CD8-positive, alpha-beta T cell (primary cell): ENCODE measurements at regions of chr17 and their contacts with region 1.

Region 1: GRCh38 chr17:8248751-8249607 is at the start of gene PFAS:
- DNase-seq: peak; percentile 92 to 98 (median 96)
- ATAC-seq: peak; percentile 39
- H3K4me3 ChIP-seq: peak within 1 kb of the TSS; percentile 84 to 95
- H3K4me3 Mint-ChIP-seq: peak within 1 kb of the TSS; percentile 98
- H3K27ac ChIP-seq: peak within 1 kb of the TSS; percentile 97 to 98
- H3K27ac Mint-ChIP-seq: peak within 1 kb of the TSS; percentile 100
- H3K4me1 ChIP-seq: peaks cover 34% of the 10 kb centered on the region
- H3K4me1 Mint-ChIP-seq: peaks cover 48% of the 10 kb centered on the region
- H3K27me3 ChIP-seq: no peaks in the 10 kb centered on the region
- H3K27me3 Mint-ChIP-seq: no peaks in the 10 kb centered on the region
- CTCF ChIP-seq: no peak
- total RNA-seq, gene PFAS: 23.8 to 25.0 TPM

Region 2: GRCh38 chr17:7572588-7573323 is 676.2 kb before region 1 on chr17:
- CTCF ChIA-PET with region 1: no interaction called
- POLR2A ChIA-PET with region 1: no interaction called
- intact Hi-C with region 1: loop called in 1 of 2 experiments (anchors 5 kb)
- DNase-seq: peak in 8 of 9 experiments; percentile 99 to 100 (median 100)
- ATAC-seq: peak; percentile 83
- H3K4me3 ChIP-seq: peak overlapping the region; percentile 97 to 100
- H3K4me3 Mint-ChIP-seq: peak overlapping the region; percentile 99
- H3K27ac ChIP-seq: peak overlapping the region; percentile 98 to 99
- H3K27ac Mint-ChIP-seq: peak overlapping the region; percentile 96
- H3K4me1 ChIP-seq: peaks cover 28% of the 10 kb centered on the region
- H3K4me1 Mint-ChIP-seq: peaks cover 48% of the 10 kb centered on the region
- H3K27me3 ChIP-seq: no peaks in the 10 kb centered on the region
- H3K27me3 Mint-ChIP-seq: no peaks in the 10 kb centered on the region
- CTCF ChIP-seq: no peak

Region 3: GRCh38 chr17:8156246-8156992 is 92.6 kb before region 1 on chr17:
- CTCF ChIA-PET with region 1: interaction called, 3 read pairs
- POLR2A ChIA-PET with region 1: interaction called, 21 read pairs
- intact Hi-C with region 1: loop called (anchors 1 to 2 kb)
- DNase-seq: peak; percentile 100
- ATAC-seq: peak; percentile 68
- H3K4me3 ChIP-seq: peak overlapping the region; percentile 82 to 90
- H3K4me3 Mint-ChIP-seq: no peak overlapping the region
- H3K27ac ChIP-seq: peak overlapping the region; percentile 100
- H3K27ac Mint-ChIP-seq: no peak overlapping the region
- H3K4me1 ChIP-seq: peaks cover 77% of the 10 kb centered on the region
- H3K4me1 Mint-ChIP-seq: peaks cover 68% of the 10 kb centered on the region
- H3K27me3 ChIP-seq: no peaks in the 10 kb centered on the region
- H3K27me3 Mint-ChIP-seq: no peaks in the 10 kb centered on the region
- CTCF ChIP-seq: no peak

Region 4: DNA sequence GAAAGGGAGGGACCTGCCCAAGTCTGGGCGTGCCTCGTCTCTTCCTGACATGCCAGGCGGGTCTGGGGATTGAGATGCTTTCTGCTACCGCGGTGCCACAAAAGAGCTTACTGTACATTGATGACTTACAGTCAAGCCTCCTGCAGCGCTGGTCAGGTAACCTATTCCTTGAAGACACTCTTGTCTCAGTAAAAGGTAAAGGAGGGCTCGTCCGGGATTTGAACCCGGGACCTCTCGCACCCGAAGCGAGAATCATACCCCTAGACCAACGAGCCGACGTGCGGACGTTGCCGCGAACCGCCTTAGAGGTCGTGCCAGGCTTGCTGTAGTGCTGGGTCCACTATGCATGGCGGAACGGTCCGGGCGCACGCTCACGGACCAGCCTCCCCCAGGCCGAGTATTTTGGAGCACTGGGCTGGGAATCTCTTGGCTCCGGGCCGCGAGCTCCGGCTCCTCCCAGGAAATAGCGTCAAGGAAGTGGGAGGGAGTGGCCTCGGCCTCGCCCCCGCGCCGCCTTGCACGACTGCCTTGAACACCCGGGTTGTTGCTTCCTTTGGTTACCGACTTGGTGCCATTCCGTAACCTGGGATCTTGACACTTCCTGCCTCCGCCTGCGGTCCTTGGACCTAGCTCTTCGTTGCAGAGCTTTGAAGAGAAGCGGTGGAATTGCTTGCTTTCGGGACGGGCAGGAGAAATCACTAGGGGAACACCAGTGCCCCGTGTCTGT is 26.2 kb before region 1 on chr17:
- CTCF ChIA-PET with region 1: interaction called, 45 read pairs
- POLR2A ChIA-PET with region 1: interaction called, 248 read pairs
- intact Hi-C with region 1: loop called (anchors 1 kb)
- DNase-seq: peak; percentile 82 to 93 (median 90)
- ATAC-seq: peak; percentile 47
- H3K4me3 ChIP-seq: peak overlapping the region; percentile 80 to 93
- H3K4me3 Mint-ChIP-seq: peak overlapping the region; percentile 92
- H3K27ac ChIP-seq: peak overlapping the region; percentile 90 to 98
- H3K27ac Mint-ChIP-seq: peak overlapping the region; percentile 97
- H3K4me1 ChIP-seq: peaks cover 43% of the 10 kb centered on the region
- H3K4me1 Mint-ChIP-seq: peaks cover 61% of the 10 kb centered on the region
- H3K27me3 ChIP-seq: no peaks in the 10 kb centered on the region
- H3K27me3 Mint-ChIP-seq: no peaks in the 10 kb centered on the region
- CTCF ChIP-seq: no peak

Region 5: DNA sequence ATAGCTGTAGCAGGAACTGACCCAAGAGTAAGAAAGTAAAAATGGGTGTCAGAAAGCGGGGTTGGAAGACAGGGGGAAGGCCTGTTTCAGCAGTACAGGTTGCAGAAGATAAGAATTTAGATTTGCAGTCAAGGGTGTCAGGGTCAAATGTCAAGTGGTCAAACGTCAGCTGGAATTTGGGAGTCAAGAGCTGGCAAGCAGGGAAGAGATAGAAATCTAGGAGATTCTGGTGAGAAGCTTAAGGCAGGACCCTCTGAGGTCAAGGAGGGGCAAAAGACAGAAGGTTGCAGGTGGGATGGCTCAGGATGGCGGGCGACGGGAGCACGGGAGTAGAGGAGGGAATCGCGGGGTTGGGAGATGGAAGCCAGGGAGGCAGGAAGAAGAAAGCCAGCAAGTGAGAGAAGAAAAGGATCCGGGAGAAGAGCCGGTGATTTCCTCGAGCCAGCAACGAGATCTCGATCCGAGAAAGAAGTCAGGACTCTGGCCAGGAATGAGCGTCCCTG is 45.9 kb after region 1 on chr17:
- CTCF ChIA-PET with region 1: interaction called, 8 read pairs
- POLR2A ChIA-PET with region 1: interaction called, 39 read pairs
- intact Hi-C with region 1: loop called (anchors 1 kb)
- DNase-seq: no peak
- ATAC-seq: no peak
- H3K4me3 ChIP-seq: peak overlapping the region; percentile 80 to 98
- H3K4me3 Mint-ChIP-seq: peak overlapping the region; percentile 86
- H3K27ac ChIP-seq: peak overlapping the region; percentile 80 to 87
- H3K27ac Mint-ChIP-seq: peak overlapping the region; percentile 90
- H3K4me1 ChIP-seq: peaks cover 12% of the 10 kb centered on the region
- H3K4me1 Mint-ChIP-seq: peaks cover 30% of the 10 kb centered on the region
- H3K27me3 ChIP-seq: no peaks in the 10 kb centered on the region
- H3K27me3 Mint-ChIP-seq: no peaks in the 10 kb centered on the region
- CTCF ChIP-seq: no peak

Region 6: GRCh38 chr17:8383143-8383822 is 134.3 kb after region 1 on chr17 and contains the start of gene RPL26:
- CTCF ChIA-PET with region 1: no interaction called
- POLR2A ChIA-PET with region 1: no interaction called
- intact Hi-C with region 1: loop called in 1 of 2 experiments (anchors 1 kb)
- DNase-seq: peak; percentile 88 to 98 (median 95)
- ATAC-seq: peak; percentile 89
- H3K4me3 ChIP-seq: peak within 1 kb of the TSS; percentile 70 to 72
- H3K4me3 Mint-ChIP-seq: peak within 1 kb of the TSS; percentile 96
- H3K27ac ChIP-seq: peak within 1 kb of the TSS; percentile 71 to 76
- H3K27ac Mint-ChIP-seq: peak within 1 kb of the TSS; percentile 93
- H3K4me1 ChIP-seq: peaks cover 40% of the 10 kb centered on the region
- H3K4me1 Mint-ChIP-seq: peaks cover 69% of the 10 kb centered on the region
- H3K27me3 ChIP-seq: no peaks in the 10 kb centered on the region
- H3K27me3 Mint-ChIP-seq: no peaks in the 10 kb centered on the region
- CTCF ChIP-seq: peak; percentile 100
- total RNA-seq, gene RPL26: 2,888 to 2,889 TPM